PC-3 (cell line): ENCODE measurements at regions of chr19 and their contacts with region 1.

Region 1: DNA sequence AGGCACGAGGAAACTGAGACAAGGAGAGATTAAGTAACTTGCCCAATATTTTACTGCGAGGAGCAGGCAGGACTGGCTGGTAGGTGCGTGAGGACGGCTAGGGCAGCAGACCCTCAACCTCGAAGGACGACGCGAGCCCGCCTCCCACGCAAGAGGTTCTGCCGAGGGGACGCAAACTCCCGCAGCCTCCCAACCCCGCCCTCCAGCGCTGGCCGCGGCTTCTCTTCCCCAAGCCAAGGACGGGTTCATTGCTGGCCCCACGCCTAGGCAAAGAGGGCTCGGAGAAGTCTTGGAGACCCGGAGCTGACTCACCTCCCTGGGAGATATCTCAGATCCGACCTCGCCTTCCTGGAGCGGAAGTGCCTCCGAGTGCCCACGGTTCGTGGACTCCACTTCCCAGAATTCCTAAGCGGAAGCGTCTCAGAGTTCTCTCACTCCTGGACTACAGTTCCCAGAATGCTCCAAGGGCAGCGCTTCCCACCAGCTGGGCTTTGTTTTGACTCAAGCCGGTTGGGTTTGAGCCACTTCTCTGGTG is at the start of gene ZNF235:
- DNase-seq: peak; percentile 96
- ATAC-seq: peak; percentile 98
- H3K4me3 ChIP-seq: peak within 1 kb of the TSS; percentile 89
- H3K27ac ChIP-seq: peak within 1 kb of the TSS; percentile 67
- H3K4me1 ChIP-seq: peaks cover 10% of the 10 kb centered on the region
- H3K27me3 ChIP-seq: no peaks in the 10 kb centered on the region
- CTCF ChIP-seq: no peak
- total RNA-seq, gene ZNF235: 0.92 and 1.0 TPM in 2 replicates

Region 2: GRCh38 chr19:44212250-44212865 is 92.4 kb before region 1 on chr19 and contains the start of gene ZNF227:
- CTCF ChIA-PET with region 1: interaction called, 5 read pairs
- POLR2A ChIA-PET with region 1: interaction called, 4 read pairs
- intact Hi-C with region 1: loop called (anchors 2 kb)
- DNase-seq: peak; percentile 92
- ATAC-seq: peak; percentile 97
- H3K4me3 ChIP-seq: peak within 1 kb of the TSS; percentile 90
- H3K27ac ChIP-seq: peak within 1 kb of the TSS; percentile 48
- H3K4me1 ChIP-seq: peaks cover 7% of the 10 kb centered on the region; the same call in 1 of the 2 replicates
- H3K27me3 ChIP-seq: no peaks in the 10 kb centered on the region
- CTCF ChIP-seq: no peak
- total RNA-seq, gene ZNF227: 4.9 and 8.7 TPM in 2 replicates

Region 3: GRCh38 chr19:44258835-44259413 is 45.8 kb before region 1 on chr19:
- CTCF ChIA-PET with region 1: no interaction called
- POLR2A ChIA-PET with region 1: no interaction called
- intact Hi-C with region 1: loop called (anchors 2 kb)
- DNase-seq: peak; percentile 4
- ATAC-seq: no peak
- H3K4me3 ChIP-seq: no peak overlapping the region
- H3K27ac ChIP-seq: no peak overlapping the region
- H3K4me1 ChIP-seq: peaks cover 12% of the 10 kb centered on the region; the same call in 1 of the 2 replicates
- H3K27me3 ChIP-seq: no peaks in the 10 kb centered on the region
- CTCF ChIP-seq: no peak